ENCODE measurements at regions of chr12 and their contacts with region 1.

Region 1: DNA sequence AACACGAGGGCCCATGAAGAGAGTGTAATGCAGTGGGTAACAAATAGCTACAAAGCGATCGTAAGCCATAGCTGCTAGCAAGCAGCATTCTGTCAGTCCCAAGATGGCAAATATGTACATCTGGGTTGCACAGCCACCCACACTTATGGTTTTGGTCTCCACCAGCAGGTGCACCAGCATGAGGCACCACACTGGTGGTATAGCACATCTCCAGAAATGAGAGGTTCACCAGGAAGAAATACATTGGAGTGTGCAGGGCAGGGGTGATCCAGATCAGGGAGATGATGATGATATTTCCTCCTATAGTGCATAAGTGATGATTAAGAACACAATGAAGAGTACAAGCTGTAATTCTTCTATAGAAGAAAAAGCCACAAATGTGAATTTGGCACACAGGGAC is 26.4 kb upstream of the OR10A7 start:
- DNase-seq: no peak
- H3K4me3 ChIP-seq: no peak overlapping the region
- H3K27ac ChIP-seq: no peak overlapping the region
- H3K4me1 ChIP-seq: no peaks in the 10 kb centered on the region
- H3K27me3 ChIP-seq: peaks cover 0 to under 1% (median 0%) of the 10 kb centered on the region in 3 donors
- CTCF ChIP-seq: no peak
- EP300 ChIP-seq: no peak
- POLR2A ChIP-seq: no peak

Region 2: GRCh38 chr12:55229356-55229755 is 35.0 kb after region 1 on chr12:
- intact Hi-C with region 1: no loop called
- DNase-seq: no peak
- H3K4me3 ChIP-seq: no peak overlapping the region
- H3K27ac ChIP-seq: no peak overlapping the region
- H3K4me1 ChIP-seq: no peaks in the 10 kb centered on the region
- H3K27me3 ChIP-seq: no peaks in the 10 kb centered on the region
- CTCF ChIP-seq: no peak
- EP300 ChIP-seq: no peak
- POLR2A ChIP-seq: no peak

Region 3: GRCh38 chr12:55619354-55620138 is 425.2 kb after region 1 on chr12:
- intact Hi-C with region 1: loop called (anchors 5 kb)
- DNase-seq: peak in 1 of 2 donors; percentile 92
- H3K4me3 ChIP-seq: no peak overlapping the region
- H3K27ac ChIP-seq: no peak overlapping the region
- H3K4me1 ChIP-seq: peaks cover 0 to 8% (median 4%) of the 10 kb centered on the region in 4 donors
- H3K27me3 ChIP-seq: no peaks in the 10 kb centered on the region
- CTCF ChIP-seq: peak in 5 of 7 experiments; percentile 53 to 84 (median 76)
- EP300 ChIP-seq: no peak
- POLR2A ChIP-seq: no peak

Measured in stomach (tissue), 19 donors.